CD8-positive, alpha-beta T cell (primary cell): ENCODE measurements at regions of chr3 and their contacts with region 1.

Region 1: DNA sequence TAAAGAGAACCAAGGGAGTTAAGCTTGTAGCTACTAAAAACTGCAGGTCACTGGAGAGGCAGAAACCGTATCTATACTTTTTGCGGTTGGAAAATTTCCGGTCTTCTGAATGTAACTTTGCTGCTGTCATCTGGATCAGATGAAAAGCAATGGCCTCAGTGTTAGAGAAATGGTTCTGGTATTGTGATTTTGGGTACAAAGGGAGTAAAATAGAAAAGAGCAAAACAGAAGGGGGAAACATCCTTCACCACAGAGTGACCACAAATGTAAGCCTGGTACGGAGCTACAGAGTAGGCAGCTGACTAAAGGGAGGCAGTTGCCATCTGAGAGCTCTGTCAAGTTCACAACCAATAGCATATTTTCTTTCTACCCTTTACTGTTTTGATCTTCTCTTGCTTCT is 5.6 kb downstream of the CD96 start:
- DNase-seq: peak in 7 of 9 experiments; percentile 26 to 86 (median 66)
- ATAC-seq: peak; percentile 76
- H3K4me3 ChIP-seq: peak overlapping the region; percentile 33 to 67
- H3K4me3 Mint-ChIP-seq: no peak overlapping the region
- H3K27ac ChIP-seq: peak overlapping the region; percentile 57 to 89
- H3K27ac Mint-ChIP-seq: no peak overlapping the region
- H3K4me1 ChIP-seq: peaks cover 82% of the 10 kb centered on the region
- H3K4me1 Mint-ChIP-seq: peaks cover 36% of the 10 kb centered on the region
- H3K27me3 ChIP-seq: no peaks in the 10 kb centered on the region
- H3K27me3 Mint-ChIP-seq: no peaks in the 10 kb centered on the region
- CTCF ChIP-seq: no peak

Region 2: DNA sequence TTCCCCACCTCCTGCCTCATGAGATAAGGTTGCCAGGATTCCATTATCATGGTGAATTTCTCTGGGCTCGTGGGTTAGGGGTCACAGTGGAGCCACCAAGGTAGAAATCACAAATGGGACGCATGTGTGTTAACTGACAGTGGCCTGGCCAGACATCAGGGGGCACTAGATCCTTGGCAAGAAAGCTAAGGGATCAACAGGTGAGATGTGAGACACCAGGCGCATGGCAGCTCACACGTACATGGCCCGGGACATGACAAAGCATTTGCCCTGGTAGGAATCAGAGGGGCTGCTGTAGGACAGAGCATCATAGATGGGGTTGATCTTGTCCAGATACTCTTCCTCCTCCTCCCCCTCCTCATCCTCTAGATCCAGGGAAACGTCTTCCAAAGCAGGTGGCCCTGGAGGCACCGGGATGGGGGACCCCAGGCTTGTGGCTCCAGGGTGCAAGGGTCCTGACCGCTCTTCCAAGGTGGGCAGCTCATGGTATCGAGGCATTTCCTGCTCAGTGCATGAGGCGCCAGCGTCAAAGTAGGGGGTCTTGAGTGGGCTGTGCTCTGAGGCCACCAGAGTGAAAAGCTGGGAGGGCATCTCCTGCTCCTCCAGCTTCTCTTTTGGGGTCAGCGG is 22.9 kb after region 1 on chr3:
- CTCF ChIA-PET with region 1: no interaction called
- POLR2A ChIA-PET with region 1: interaction called, 3 read pairs
- intact Hi-C with region 1: loop called (anchors 1 to 2 kb)
- DNase-seq: peak in 1 of 9 experiments; percentile 24
- ATAC-seq: no peak
- H3K4me3 ChIP-seq: no peak overlapping the region
- H3K4me3 Mint-ChIP-seq: no peak overlapping the region
- H3K27ac ChIP-seq: no peak overlapping the region
- H3K27ac Mint-ChIP-seq: peak overlapping the region; percentile 72
- H3K4me1 ChIP-seq: peaks cover 33% of the 10 kb centered on the region
- H3K4me1 Mint-ChIP-seq: peaks cover 71% of the 10 kb centered on the region
- H3K27me3 ChIP-seq: no peaks in the 10 kb centered on the region
- H3K27me3 Mint-ChIP-seq: no peaks in the 10 kb centered on the region
- CTCF ChIP-seq: no peak

Region 3: DNA sequence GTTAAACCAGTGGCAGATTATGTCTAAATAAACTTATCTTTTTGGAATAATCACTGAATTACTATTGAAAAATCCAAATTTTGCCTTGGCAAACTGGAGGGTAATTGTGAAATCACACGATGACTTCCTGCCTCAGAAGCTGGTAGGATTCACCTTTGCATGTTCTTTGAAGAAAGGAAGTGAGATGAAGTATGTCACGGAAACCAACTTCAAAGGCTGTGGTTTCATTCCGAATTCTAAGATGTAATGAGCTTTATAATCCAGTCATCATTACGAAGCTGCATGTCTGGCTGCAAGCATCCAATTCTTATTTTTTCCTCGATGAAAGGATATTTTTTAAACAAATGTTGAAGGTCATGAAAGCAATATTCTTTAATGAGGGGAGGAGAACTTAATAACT is 62.6 kb after region 1 on chr3:
- CTCF ChIA-PET with region 1: interaction called, 3 read pairs
- POLR2A ChIA-PET with region 1: interaction called, 8 read pairs
- intact Hi-C with region 1: loop called (anchors 1 to 2 kb)
- DNase-seq: peak in 6 of 9 experiments; percentile 16 to 92 (median 46)
- ATAC-seq: peak; percentile 79
- H3K4me3 ChIP-seq: no peak overlapping the region
- H3K4me3 Mint-ChIP-seq: peak overlapping the region; percentile 64
- H3K27ac ChIP-seq: peak overlapping the region; percentile 14 to 77
- H3K27ac Mint-ChIP-seq: peak overlapping the region; percentile 94
- H3K4me1 ChIP-seq: peaks cover 43% of the 10 kb centered on the region
- H3K4me1 Mint-ChIP-seq: peaks cover 70% of the 10 kb centered on the region
- H3K27me3 ChIP-seq: no peaks in the 10 kb centered on the region
- H3K27me3 Mint-ChIP-seq: no peaks in the 10 kb centered on the region
- CTCF ChIP-seq: no peak

Region 4: GRCh38 chr3:111676211-111677006 is 128.8 kb after region 1 on chr3:
- CTCF ChIA-PET with region 1: no interaction called
- POLR2A ChIA-PET with region 1: no interaction called
- intact Hi-C with region 1: no loop called
- DNase-seq: peak in 2 of 9 experiments; percentile 27 to 46
- ATAC-seq: no peak
- H3K4me3 ChIP-seq: peak overlapping the region; percentile 66 to 79
- H3K4me3 Mint-ChIP-seq: peak overlapping the region; percentile 96
- H3K27ac ChIP-seq: peak overlapping the region; percentile 1 to 85
- H3K27ac Mint-ChIP-seq: peak overlapping the region; percentile 99
- H3K4me1 ChIP-seq: peaks cover 68% of the 10 kb centered on the region
- H3K4me1 Mint-ChIP-seq: peaks cover 85% of the 10 kb centered on the region
- H3K27me3 ChIP-seq: no peaks in the 10 kb centered on the region
- H3K27me3 Mint-ChIP-seq: no peaks in the 10 kb centered on the region
- CTCF ChIP-seq: no peak